ENCODE measurements at regions of chr1 and their contacts with region 1.

Region 1: GRCh38 chr1:22625262-22625925 is 11.0 kb upstream of the C1QA start:
- DNase-seq: no peak
- ATAC-seq: peak; percentile 38; the same call in 1 of the 2 replicates
- H3K4me3 ChIP-seq: no peak overlapping the region
- H3K27ac ChIP-seq: no peak overlapping the region
- H3K4me1 ChIP-seq: no peaks in the 10 kb centered on the region
- H3K27me3 ChIP-seq: peaks cover 36% of the 10 kb centered on the region; the same call in 1 of the 2 replicates
- CTCF ChIP-seq: no peak
- POLR2A ChIP-seq: no peak
- RAD21 ChIP-seq: no peak

Region 2: DNA sequence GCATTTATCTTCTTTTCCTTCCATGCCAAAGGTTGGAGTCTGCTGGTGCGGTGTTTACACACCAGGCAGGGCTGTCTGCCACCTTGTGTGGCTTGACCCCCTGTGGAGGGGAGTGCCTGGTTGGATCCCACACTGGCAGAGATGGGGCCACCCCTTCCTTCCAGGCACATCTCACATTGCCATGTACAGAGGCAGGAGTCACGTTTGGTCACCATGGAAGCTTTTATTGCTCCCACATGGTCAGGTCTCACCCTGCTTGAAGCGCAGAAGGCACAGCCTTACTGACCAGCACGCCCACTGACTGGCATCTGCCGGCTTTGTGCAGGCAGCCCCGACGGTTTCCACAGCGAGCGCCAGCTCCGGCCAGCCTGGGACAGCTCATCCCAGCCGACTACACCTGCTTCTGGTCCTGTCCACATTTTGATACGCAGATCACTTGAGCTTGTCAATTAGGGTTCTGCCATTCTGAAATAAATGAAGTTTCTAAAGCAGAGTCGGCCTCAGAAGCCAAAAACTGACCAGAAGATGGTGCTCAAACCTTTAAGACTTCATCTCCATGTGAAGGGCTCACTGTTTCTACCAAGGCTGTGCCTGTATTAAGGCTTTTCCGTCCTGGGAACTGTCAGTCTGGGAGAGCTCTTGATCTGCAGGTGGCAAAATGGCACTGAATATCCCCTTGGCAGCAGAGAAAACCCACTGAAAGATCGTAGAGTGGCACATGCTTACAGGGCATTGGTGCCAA is 97.7 kb before region 1 on chr1:
- CTCF ChIA-PET with region 1: no interaction called
- POLR2A ChIA-PET with region 1: no interaction called
- RAD21 ChIA-PET with region 1: no interaction called
- intact Hi-C with region 1: loop called (anchors 10 kb)
- DNase-seq: no peak
- ATAC-seq: no peak
- H3K4me3 ChIP-seq: no peak overlapping the region
- H3K27ac ChIP-seq: no peak overlapping the region
- H3K4me1 ChIP-seq: no peaks in the 10 kb centered on the region
- H3K27me3 ChIP-seq: no peaks in the 10 kb centered on the region
- CTCF ChIP-seq: peak in 1 of 3 experiments; percentile 21; a peak in 2 of 6 replicates
- POLR2A ChIP-seq: no peak
- RAD21 ChIP-seq: peak; percentile 43

Measured in HCT116 (cell line).